Activated CD4-positive, alpha-beta T cell treated with anti-CD3 and anti-CD28 coated beads, Interleukin-2, amount 10 ng/mL, durations not matched to agents 24 days and 14 days (primary cell): ENCODE measurements at regions of chr1 and their contacts with region 1.

Region 1: GRCh38 chr1:91673613-91674012 is 173.0 kb downstream of the CDC7 start:
- DNase-seq: no peak
- H3K4me3 Mint-ChIP-seq: no peak overlapping the region
- H3K27ac Mint-ChIP-seq: peak overlapping the region; percentile 88
- H3K4me1 Mint-ChIP-seq: peaks cover 33% of the 10 kb centered on the region
- H3K27me3 Mint-ChIP-seq: no peaks in the 10 kb centered on the region

Region 2: GRCh38 chr1:91591175-91591968 is 82.2 kb before region 1 on chr1:
- intact Hi-C with region 1: loop called (anchors 5 kb)
- DNase-seq: peak; percentile 66
- H3K4me3 Mint-ChIP-seq: peak overlapping the region; percentile 76
- H3K27ac Mint-ChIP-seq: peak overlapping the region; percentile 85
- H3K4me1 Mint-ChIP-seq: peaks cover 29% of the 10 kb centered on the region
- H3K27me3 Mint-ChIP-seq: peaks cover 2% of the 10 kb centered on the region

Region 3: DNA sequence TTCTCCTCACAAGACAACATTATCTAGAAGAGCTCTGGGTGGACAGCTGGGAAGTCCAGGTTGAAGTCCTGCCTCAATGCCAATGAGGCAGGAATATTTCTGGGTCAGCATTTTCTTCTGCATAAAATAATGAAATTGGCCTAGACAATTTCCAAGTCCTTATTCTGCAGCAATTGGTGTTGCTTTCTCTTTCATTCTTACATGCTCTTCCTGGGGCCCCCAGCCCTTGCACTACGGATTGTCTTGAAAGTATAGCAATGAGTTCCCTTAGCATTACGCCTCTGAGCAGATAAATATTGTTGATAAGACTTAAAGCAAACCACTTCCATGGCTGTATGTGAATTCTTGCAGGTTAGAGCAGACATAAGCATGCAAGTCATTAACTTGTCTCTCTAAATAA is 23.8 kb after region 1 on chr1:
- intact Hi-C with region 1: loop called (anchors 1 kb)
- DNase-seq: peak; percentile 90
- H3K4me3 Mint-ChIP-seq: peak overlapping the region; percentile 74
- H3K27ac Mint-ChIP-seq: peak overlapping the region; percentile 76
- H3K4me1 Mint-ChIP-seq: peaks cover 30% of the 10 kb centered on the region
- H3K27me3 Mint-ChIP-seq: no peaks in the 10 kb centered on the region

Region 4: GRCh38 chr1:91876040-91876470 is 202.4 kb after region 1 on chr1:
- intact Hi-C with region 1: loop called (anchors 2 kb)
- DNase-seq: no peak
- H3K4me3 Mint-ChIP-seq: peak overlapping the region; percentile 44
- H3K27ac Mint-ChIP-seq: peak overlapping the region; percentile 13
- H3K4me1 Mint-ChIP-seq: peaks cover 58% of the 10 kb centered on the region
- H3K27me3 Mint-ChIP-seq: peaks cover 12% of the 10 kb centered on the region